ENCODE measurements at regions of chr2 and their contacts with region 1.

Region 1: GRCh38 chr2:205885492-205886099 is 200.4 kb downstream of the INO80D start:
- DNase-seq: peak; percentile 90 to 93 (median 91)
- H3K4me3 ChIP-seq: no peak overlapping the region
- H3K27ac ChIP-seq: no peak overlapping the region
- H3K4me1 ChIP-seq: no peaks in the 10 kb centered on the region
- H3K27me3 ChIP-seq: no peaks in the 10 kb centered on the region
- CTCF ChIP-seq: peak; percentile 88

Region 2: GRCh38 chr2:205776139-205776538 is 109.5 kb before region 1 on chr2:
- intact Hi-C with region 1: loop called (anchors 5 kb)
- DNase-seq: peak in 3 of 5 donors; percentile 53 to 71 (median 69)
- H3K4me3 ChIP-seq: no peak overlapping the region
- H3K27ac ChIP-seq: no peak overlapping the region
- H3K4me1 ChIP-seq: no peaks in the 10 kb centered on the region
- H3K27me3 ChIP-seq: no peaks in the 10 kb centered on the region
- CTCF ChIP-seq: peak; percentile 71